CD8-positive, alpha-beta T cell (primary cell): ENCODE measurements at regions of chrX and their contacts with region 1.

Region 1: DNA sequence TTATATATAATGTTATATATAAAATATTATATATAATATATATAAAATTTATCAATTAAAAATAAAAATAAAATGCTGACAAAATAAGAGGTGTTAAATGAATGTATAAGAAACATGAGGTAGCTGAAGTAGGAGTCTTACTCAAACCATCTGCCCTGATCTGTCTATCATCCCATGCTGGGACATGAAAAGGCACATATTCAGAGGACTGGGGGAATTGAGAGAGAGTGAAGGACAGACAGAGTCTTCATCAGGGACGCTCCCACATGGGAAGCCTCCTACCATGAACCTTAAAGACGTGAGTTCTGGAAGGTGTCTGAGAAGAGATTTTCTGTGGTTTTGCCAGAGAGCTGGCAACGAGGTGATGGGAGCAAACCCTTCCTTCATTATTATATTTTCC is 4.1 kb upstream of the ARSF start:
- DNase-seq: no peak
- ATAC-seq: no peak
- H3K4me3 ChIP-seq: no peak overlapping the region
- H3K4me3 Mint-ChIP-seq: no peak overlapping the region
- H3K27ac ChIP-seq: no peak overlapping the region
- H3K27ac Mint-ChIP-seq: no peak overlapping the region
- H3K4me1 ChIP-seq: no peaks in the 10 kb centered on the region
- H3K4me1 Mint-ChIP-seq: no peaks in the 10 kb centered on the region
- H3K27me3 ChIP-seq: no peaks in the 10 kb centered on the region
- H3K27me3 Mint-ChIP-seq: no peaks in the 10 kb centered on the region
- CTCF ChIP-seq: no peak

Region 2: DNA sequence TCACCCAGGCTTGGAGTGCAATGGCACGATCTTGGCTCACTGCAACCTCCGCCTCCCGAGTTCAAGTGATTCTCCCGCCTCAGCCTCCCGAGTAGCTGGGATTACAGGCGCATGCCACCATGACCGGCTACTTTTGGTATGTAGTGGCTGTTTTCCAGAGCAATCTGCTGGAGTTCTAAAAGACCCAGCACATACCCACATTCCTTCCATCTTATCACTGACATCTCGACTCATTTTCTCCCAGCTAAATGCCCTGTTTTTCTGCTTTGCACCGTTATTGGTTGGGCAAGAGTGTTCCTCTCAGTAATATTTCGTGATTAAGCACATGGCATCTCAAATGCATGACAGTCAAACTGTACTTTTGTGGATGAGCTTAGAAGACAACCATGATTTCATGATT is 622.5 kb after region 1 on chrX:
- CTCF ChIA-PET with region 1: no interaction called
- POLR2A ChIA-PET with region 1: no interaction called
- intact Hi-C with region 1: loop called in 1 of 2 experiments (anchors 5 kb)
- DNase-seq: no peak
- ATAC-seq: no peak
- H3K4me3 ChIP-seq: no peak overlapping the region
- H3K4me3 Mint-ChIP-seq: no peak overlapping the region
- H3K27ac ChIP-seq: no peak overlapping the region
- H3K27ac Mint-ChIP-seq: no peak overlapping the region
- H3K4me1 ChIP-seq: no peaks in the 10 kb centered on the region
- H3K4me1 Mint-ChIP-seq: peaks cover 2% of the 10 kb centered on the region
- H3K27me3 ChIP-seq: no peaks in the 10 kb centered on the region
- H3K27me3 Mint-ChIP-seq: no peaks in the 10 kb centered on the region
- CTCF ChIP-seq: no peak